Mammary epithelial cell (primary cell): ENCODE measurements at regions of chr7 and their contacts with region 1.

Region 1: DNA sequence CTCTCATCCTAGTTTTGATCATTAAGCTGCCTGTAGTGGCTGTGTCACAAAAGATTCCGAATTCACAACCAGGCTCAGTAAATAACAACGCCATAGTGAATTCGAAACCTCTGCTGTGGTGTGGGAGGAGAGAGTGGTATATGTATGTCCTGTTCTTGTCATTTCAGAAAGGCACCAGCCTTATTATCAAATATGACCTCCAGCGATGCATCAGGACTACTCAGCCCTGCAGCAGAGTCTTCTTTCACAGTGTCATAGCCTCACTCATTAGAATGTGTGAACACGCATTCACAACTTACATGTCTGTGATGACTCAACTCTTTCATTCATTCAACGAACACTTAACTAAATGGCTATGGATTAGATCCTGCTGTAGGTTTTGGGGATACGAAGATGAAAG is 15.3 kb downstream of the AOC1 start:
- DNase-seq: no peak
- H3K4me3 ChIP-seq: no peak overlapping the region
- H3K27ac ChIP-seq: no peak overlapping the region
- H3K4me1 ChIP-seq: no peaks in the 10 kb centered on the region
- H3K27me3 ChIP-seq: peaks cover 3% of the 10 kb centered on the region
- CTCF ChIP-seq: no peak

Region 2: DNA sequence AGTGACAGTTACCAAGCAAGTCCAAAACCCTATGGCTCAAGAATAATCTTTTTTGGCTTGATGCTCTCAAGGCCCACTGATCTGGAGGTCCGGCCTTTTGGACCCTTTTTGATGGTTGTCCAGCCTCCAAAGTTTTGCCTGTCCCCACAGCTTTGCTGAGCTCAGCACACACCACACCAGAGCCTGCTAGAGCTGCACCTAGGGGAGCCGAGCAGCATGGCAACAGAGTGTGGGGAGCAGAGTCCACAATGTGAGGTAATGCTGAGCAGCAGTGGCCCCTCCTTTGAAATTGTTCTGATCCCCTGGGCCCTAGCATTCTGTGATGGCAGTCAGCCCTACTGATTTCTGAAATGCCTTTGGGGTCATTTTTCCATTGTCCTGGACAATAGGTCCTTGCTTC is 343.6 kb before region 1 on chr7:
- CTCF ChIA-PET with region 1: no interaction called
- dilution Hi-C with region 1: no loop called
- in situ Hi-C with region 1: no loop called
- intact Hi-C with region 1: no loop called
- DNase-seq: no peak
- H3K4me3 ChIP-seq: no peak overlapping the region
- H3K27ac ChIP-seq: no peak overlapping the region
- H3K4me1 ChIP-seq: no peaks in the 10 kb centered on the region
- H3K27me3 ChIP-seq: peaks cover under 1% of the 10 kb centered on the region
- CTCF ChIP-seq: no peak

Region 3: DNA sequence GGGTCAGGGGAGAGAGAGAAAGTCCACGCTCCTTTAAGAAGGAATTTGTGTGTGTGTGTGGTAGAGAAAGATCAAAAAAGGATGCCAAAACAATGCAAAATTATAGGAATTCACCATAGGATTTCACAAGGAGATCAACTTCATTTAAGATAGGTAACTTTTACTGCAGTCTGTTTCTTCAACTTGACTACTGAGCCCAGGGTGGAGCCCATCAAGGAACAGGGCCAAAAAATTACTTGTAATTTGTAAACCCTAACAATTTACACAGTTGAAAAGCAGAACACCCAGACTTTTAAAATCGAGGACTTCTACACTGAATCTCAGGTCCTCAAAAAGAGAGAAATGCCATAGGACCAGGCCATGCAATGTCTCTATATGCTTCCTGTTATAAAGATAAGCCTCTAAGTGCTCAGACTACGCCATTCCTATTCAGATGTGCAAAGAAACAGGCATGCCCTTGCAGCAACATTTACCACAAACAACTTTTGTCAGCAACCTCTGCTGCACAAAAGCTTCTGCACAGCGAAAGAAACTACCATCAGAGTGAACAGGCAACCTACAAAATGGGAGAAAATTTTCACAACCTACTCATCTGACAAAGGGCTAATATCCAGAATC is 311.0 kb before region 1 on chr7:
- CTCF ChIA-PET with region 1: no interaction called
- dilution Hi-C with region 1: no loop called
- in situ Hi-C with region 1: no loop called
- intact Hi-C with region 1: no loop called
- DNase-seq: no peak
- H3K4me3 ChIP-seq: no peak overlapping the region
- H3K27ac ChIP-seq: no peak overlapping the region
- H3K4me1 ChIP-seq: no peaks in the 10 kb centered on the region
- H3K27me3 ChIP-seq: no peaks in the 10 kb centered on the region
- CTCF ChIP-seq: no peak

Region 4: DNA sequence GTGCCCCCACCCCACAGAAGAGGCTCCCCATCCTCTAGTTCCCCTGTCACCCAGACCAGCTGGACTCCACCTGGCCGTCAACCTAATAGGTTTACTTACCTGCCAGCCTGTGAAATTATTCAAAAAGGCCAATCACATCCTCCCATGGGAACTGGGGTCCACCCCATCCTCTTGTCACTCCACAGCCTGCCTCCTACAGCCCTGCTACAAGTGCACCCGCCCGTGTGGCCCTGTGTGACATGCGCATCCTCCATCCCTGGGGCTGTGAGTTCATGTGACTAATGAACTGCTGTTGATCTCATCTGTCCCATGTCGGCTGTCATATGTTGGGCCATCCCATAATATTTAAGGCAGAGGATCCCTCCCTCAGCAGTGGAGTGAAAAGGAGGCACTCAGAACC is 24.1 kb after region 1 on chr7:
- CTCF ChIA-PET with region 1: no interaction called
- dilution Hi-C with region 1: no loop called
- in situ Hi-C with region 1: no loop called
- intact Hi-C with region 1: no loop called
- DNase-seq: no peak
- H3K4me3 ChIP-seq: no peak overlapping the region
- H3K27ac ChIP-seq: no peak overlapping the region
- H3K4me1 ChIP-seq: no peaks in the 10 kb centered on the region
- H3K27me3 ChIP-seq: peaks cover 2% of the 10 kb centered on the region
- CTCF ChIP-seq: no peak

Region 5: GRCh38 chr7:150903606-150904005 is 36.0 kb after region 1 on chr7:
- CTCF ChIA-PET with region 1: no interaction called
- dilution Hi-C with region 1: loop called (anchors 5 kb)
- in situ Hi-C with region 1: no loop called
- intact Hi-C with region 1: no loop called
- DNase-seq: peak; percentile 77
- H3K4me3 ChIP-seq: no peak overlapping the region
- H3K27ac ChIP-seq: peak overlapping the region; percentile 8
- H3K4me1 ChIP-seq: peaks cover 12% of the 10 kb centered on the region
- H3K27me3 ChIP-seq: no peaks in the 10 kb centered on the region
- CTCF ChIP-seq: no peak

Region 6: GRCh38 chr7:151256410-151257045 is 388.9 kb after region 1 on chr7:
- CTCF ChIA-PET with region 1: interaction called, 11 read pairs
- dilution Hi-C with region 1: no loop called
- in situ Hi-C with region 1: no loop called
- intact Hi-C with region 1: no loop called
- DNase-seq: no peak
- H3K4me3 ChIP-seq: no peak overlapping the region
- H3K27ac ChIP-seq: no peak overlapping the region
- H3K4me1 ChIP-seq: peaks cover 6% of the 10 kb centered on the region
- H3K27me3 ChIP-seq: peaks cover 7% of the 10 kb centered on the region
- CTCF ChIP-seq: no peak